ENCODE measurements at regions of chr6 and their contacts with region 1.

Region 1: GRCh38 chr6:14431385-14432330 is 314.1 kb downstream of the CD83 start:
- DNase-seq: peak in 2 of 5 donors; percentile 49 to 60
- ATAC-seq: peak; percentile 92 to 96 (median 93)
- H3K4me3 ChIP-seq: peak overlapping the region; percentile 2 to 59 (median 40)
- H3K27ac ChIP-seq: peak overlapping the region in 11 of 12 donors; percentile 30 to 80 (median 50)
- H3K4me1 ChIP-seq: peaks cover 0 to 21% (median 0%) of the 10 kb centered on the region in 12 donors
- H3K27me3 ChIP-seq: no peaks in the 10 kb centered on the region
- CTCF ChIP-seq: no peak
- POLR2A ChIP-seq: no peak

Region 2: DNA sequence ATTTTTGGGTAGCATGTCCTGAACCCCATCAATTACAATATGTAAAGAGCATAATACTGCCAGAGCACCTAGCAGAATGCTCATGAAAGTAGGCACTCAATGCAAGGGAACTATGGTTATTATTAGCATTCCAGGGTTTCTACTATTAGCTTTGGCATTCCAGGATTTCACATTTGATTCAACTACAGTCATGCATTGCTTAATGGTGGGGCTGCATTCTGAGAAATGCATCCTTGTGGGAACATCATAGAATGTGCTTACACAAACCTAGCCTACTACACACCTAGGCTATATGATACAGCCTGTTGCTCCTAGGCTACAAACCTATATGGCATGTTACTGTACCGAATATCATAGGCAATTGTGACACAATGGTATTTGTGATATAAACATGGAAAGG is 66.3 kb before region 1 on chr6:
- intact Hi-C with region 1: loop called in 3 of 10 experiments (anchors 2 to 10 kb)
- DNase-seq: no peak
- ATAC-seq: no peak
- H3K4me3 ChIP-seq: no peak overlapping the region
- H3K27ac ChIP-seq: no peak overlapping the region
- H3K4me1 ChIP-seq: peaks cover 0 to 40% (median 17%) of the 10 kb centered on the region in 12 donors
- H3K27me3 ChIP-seq: no peaks in the 10 kb centered on the region
- CTCF ChIP-seq: no peak
- POLR2A ChIP-seq: no peak

Region 3: DNA sequence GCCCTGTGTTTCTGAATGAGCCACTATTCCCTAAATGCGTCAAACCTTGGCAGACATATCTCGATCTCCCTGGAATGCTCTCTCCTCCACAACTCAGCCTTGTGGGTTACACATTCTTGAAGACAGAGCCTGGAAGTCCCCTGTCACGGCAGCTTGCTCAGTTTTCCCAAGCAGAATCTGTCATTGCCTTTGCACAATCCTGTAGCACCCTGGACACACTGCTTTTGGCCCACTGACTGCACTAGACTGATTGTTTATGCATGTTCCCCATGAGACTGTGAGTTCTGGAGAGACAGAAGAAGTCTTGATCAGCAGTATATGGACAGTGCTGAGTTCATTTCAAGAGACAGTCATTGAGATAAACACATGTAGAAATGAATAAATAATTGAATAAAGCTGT is 92.7 kb after region 1 on chr6:
- intact Hi-C with region 1: no loop called
- DNase-seq: peak in 4 of 5 donors; percentile 21 to 42 (median 31)
- ATAC-seq: peak; percentile 29 to 86 (median 44)
- H3K4me3 ChIP-seq: no peak overlapping the region
- H3K27ac ChIP-seq: no peak overlapping the region
- H3K4me1 ChIP-seq: peaks cover 0 to 7% (median 0%) of the 10 kb centered on the region in 12 donors
- H3K27me3 ChIP-seq: no peaks in the 10 kb centered on the region
- CTCF ChIP-seq: no peak
- POLR2A ChIP-seq: no peak

Region 4: GRCh38 chr6:14573703-14574306 is 142.1 kb after region 1 on chr6:
- intact Hi-C with region 1: loop called in 1 of 10 experiments (anchors 10 kb)
- DNase-seq: no peak
- ATAC-seq: peak in 1 of 4 donors; percentile 8
- H3K4me3 ChIP-seq: no peak overlapping the region
- H3K27ac ChIP-seq: peak overlapping the region in 2 of 12 donors; percentile 11 to 26
- H3K4me1 ChIP-seq: peaks cover 0 to 28% (median 2%) of the 10 kb centered on the region in 12 donors
- H3K27me3 ChIP-seq: no peaks in the 10 kb centered on the region
- CTCF ChIP-seq: no peak
- POLR2A ChIP-seq: no peak

Region 5: GRCh38 chr6:14638906-14639761 is 207.5 kb after region 1 on chr6:
- intact Hi-C with region 1: loop called in 3 of 10 experiments (anchors 5 to 10 kb)
- DNase-seq: peak; percentile 73 to 81 (median 77)
- ATAC-seq: peak; percentile 90 to 95 (median 93)
- H3K4me3 ChIP-seq: peak overlapping the region in 9 of 12 donors; percentile 24 to 49 (median 37)
- H3K27ac ChIP-seq: peak overlapping the region; percentile 66 to 90 (median 86)
- H3K4me1 ChIP-seq: peaks cover 4 to 50% (median 24%) of the 10 kb centered on the region in 12 donors
- H3K27me3 ChIP-seq: no peaks in the 10 kb centered on the region
- CTCF ChIP-seq: peak in 3 of 12 donors; percentile 7 to 27 (median 15)
- POLR2A ChIP-seq: no peak

Region 6: DNA sequence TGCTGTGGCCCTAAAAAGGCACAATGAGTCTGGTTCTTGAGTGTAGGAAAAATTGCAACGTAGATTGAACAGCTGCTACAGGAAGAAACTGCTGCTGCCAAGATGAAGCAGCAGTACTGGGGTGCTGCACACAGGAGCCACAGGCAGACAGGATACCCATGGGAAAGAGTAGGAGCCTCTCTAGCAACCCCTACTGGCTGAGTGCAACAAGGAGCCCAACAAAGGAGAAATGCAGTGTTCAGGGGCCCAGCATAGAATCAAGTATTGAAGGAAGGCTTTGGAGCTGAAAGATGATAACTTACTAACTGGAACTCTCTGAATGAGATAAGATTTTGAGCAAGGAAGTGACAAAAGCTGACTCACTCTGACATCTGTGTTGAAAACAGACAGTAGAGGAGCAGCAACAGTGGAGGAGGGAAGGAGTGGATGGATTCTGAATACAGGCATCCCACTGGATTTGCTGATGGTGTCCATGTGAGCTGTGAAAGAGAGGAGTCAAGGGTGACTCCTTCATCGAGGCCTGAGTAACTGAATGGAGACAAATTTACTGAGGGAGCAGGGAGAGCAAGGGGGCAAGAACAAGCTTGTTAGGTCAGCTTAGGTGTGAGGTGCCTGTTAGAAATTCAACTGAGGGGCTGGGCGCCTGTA is 279.5 kb after region 1 on chr6:
- intact Hi-C with region 1: loop called in 2 of 10 experiments (anchors 5 to 10 kb)
- DNase-seq: peak in 3 of 5 donors; percentile 48 to 55 (median 49)
- ATAC-seq: peak in 2 of 4 donors; percentile 35 to 60
- H3K4me3 ChIP-seq: no peak overlapping the region
- H3K27ac ChIP-seq: peak overlapping the region in 4 of 12 donors; percentile 4 to 56 (median 20)
- H3K4me1 ChIP-seq: peaks cover 0 to 52% (median 26%) of the 10 kb centered on the region in 12 donors
- H3K27me3 ChIP-seq: no peaks in the 10 kb centered on the region
- CTCF ChIP-seq: peak in 11 of 12 donors; percentile 24 to 63 (median 45)
- POLR2A ChIP-seq: no peak